ENCODE measurements at regions of chr6 and their contacts with region 1.

Region 1: GRCh38 chr6:107957909-107958688 is at the start of gene SEC63:
- DNase-seq: peak; percentile 92 to 97 (median 96)
- ATAC-seq: peak; percentile 100
- H3K4me3 ChIP-seq: peak within 1 kb of the TSS; percentile 96
- H3K4me3 Mint-ChIP-seq: peak within 1 kb of the TSS; percentile 94 to 100 (median 99)
- H3K27ac ChIP-seq: peak within 1 kb of the TSS; percentile 86
- H3K27ac Mint-ChIP-seq: peak within 1 kb of the TSS; percentile 80 to 98 (median 96)
- H3K4me1 ChIP-seq: peaks cover 15 to 17% of the 10 kb centered on the region in 2 donors
- H3K4me1 Mint-ChIP-seq: peaks cover 20 to 35% (median 29%) of the 10 kb centered on the region in 7 donors
- H3K27me3 ChIP-seq: no peaks in the 10 kb centered on the region
- H3K27me3 Mint-ChIP-seq: peaks cover 0 to 5% (median 0%) of the 10 kb centered on the region in 5 donors
- total RNA-seq, gene SEC63: 82.9 to 89.0 (median 86.0) TPM

Region 2: DNA sequence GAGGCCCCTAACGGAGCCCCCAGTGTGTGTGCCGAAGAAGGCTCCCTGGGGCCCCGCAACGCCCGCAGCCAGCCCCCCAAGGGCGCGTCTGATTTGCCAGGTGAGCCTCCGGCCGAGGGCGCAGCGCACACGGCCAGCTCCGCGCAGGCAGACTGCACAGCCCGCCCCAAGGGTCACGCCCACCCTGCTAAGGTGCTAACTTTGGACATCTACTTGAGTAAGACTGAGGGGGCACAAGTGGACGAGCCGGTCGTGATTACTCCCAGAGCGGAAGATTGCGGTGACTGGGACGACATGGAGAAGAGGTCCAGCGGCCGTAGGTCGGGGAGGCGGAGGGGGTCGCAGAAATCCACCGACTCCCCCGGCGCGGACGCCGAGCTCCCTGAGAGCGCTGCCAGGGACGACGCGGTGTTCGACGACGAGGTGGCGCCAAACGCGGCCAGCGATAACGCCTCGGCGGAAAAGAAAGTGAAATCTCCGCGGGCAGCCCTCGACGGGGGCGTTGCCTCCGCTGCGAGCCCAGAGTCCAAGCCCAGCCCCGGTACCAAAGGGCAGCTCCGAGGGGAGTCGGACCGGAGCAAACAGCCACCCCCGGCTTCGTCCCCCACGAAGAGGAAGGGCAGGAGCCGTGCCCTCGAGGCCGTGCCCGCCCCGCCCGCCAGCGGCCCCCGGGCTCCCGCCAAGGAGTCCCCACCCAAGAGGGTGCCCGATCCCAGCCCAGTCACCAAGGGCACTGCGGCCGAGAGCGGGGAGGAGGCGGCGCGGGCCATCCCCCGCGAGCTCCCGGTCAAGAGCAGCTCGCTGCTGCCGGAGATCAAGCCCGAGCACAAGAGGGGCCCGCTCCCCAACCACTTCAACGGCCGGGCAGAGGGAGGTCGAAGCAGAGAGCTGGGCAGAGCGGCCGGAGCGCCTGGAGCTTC is 1445.8 kb before region 1 on chr6:
- CTCF ChIA-PET with region 1: no interaction called
- POLR2A ChIA-PET with region 1: no interaction called
- intact Hi-C with region 1: loop called (anchors 5 to 10 kb)
- DNase-seq: peak; percentile 68 to 83 (median 78)
- ATAC-seq: peak; percentile 86
- H3K4me3 ChIP-seq: peak overlapping the region; percentile 92
- H3K4me3 Mint-ChIP-seq: peak overlapping the region; percentile 89 to 98 (median 96)
- H3K27ac ChIP-seq: peak overlapping the region; percentile 100
- H3K27ac Mint-ChIP-seq: peak overlapping the region; percentile 92 to 99 (median 96)
- H3K4me1 ChIP-seq: peaks cover 28 to 41% of the 10 kb centered on the region in 2 donors
- H3K4me1 Mint-ChIP-seq: peaks cover 34 to 60% (median 51%) of the 10 kb centered on the region in 7 donors
- H3K27me3 ChIP-seq: no peaks in the 10 kb centered on the region
- H3K27me3 Mint-ChIP-seq: peaks cover 0 to 40% (median 0%) of the 10 kb centered on the region in 5 donors

Region 3: GRCh38 chr6:107459283-107460082 is 498.6 kb before region 1 on chr6 and contains the start of gene PDSS2:
- CTCF ChIA-PET with region 1: no interaction called
- POLR2A ChIA-PET with region 1: no interaction called
- intact Hi-C with region 1: loop called (anchors 1 kb)
- DNase-seq: peak; percentile 83 to 98 (median 95)
- ATAC-seq: peak; percentile 100
- H3K4me3 ChIP-seq: peak within 1 kb of the TSS; percentile 95
- H3K4me3 Mint-ChIP-seq: peak within 1 kb of the TSS; percentile 87 to 99 (median 96)
- H3K27ac ChIP-seq: peak within 1 kb of the TSS; percentile 75
- H3K27ac Mint-ChIP-seq: peak within 1 kb of the TSS; percentile 92 to 99 (median 96)
- H3K4me1 ChIP-seq: peaks cover 5% of the 10 kb centered on the region in 2 donors
- H3K4me1 Mint-ChIP-seq: peaks cover 10 to 41% (median 36%) of the 10 kb centered on the region in 7 donors
- H3K27me3 ChIP-seq: no peaks in the 10 kb centered on the region
- H3K27me3 Mint-ChIP-seq: peaks cover 0 to 7% (median 0%) of the 10 kb centered on the region in 5 donors
- total RNA-seq, gene PDSS2: 12.0 to 15.3 (median 12.1) TPM

Region 4: DNA sequence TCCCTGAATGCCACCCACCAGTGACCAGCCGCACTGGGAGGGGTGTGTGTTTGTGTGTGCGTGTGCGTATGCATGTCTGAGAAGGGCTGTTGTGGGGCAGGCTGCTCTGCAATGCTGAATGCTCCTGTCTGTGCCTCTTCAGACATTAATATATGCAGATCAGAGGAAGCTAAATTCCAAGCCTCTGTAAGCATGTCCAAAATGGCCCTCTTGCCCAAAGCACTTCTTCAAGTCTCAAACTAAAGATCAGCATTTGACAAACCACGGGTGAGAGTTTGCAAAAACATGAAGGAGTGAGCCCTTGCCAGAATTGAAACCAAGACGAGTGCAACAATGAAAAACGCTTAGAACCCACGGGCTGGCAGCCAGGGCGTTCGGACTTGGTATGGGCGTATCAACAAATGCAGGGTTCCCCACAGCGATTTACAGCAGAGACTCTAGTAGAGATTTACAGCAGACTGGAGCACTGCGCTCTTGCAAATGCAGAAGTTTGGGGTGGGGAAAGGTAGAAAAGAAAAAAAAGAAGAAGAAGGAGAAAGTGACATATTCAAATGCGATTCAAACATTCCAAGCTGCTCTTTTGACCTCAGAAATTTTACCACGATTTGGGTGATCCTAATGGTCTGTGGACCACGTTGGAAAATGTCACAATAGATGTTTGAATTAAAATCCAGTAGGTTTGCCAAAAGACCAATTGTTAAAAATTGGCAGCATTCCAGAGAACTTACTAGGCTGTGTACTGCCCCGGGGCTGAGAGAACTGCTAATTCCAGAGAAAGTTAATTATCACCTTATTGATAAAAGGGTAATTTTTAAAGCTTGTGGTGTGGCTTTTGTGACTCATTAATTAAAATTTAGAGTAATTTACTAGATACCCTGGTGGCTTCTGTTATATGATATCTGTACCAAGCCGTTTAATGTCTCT is 137.5 kb before region 1 on chr6:
- CTCF ChIA-PET with region 1: no interaction called
- POLR2A ChIA-PET with region 1: interaction called, 4 read pairs
- intact Hi-C with region 1: loop called (anchors 1 to 2 kb)
- DNase-seq: peak in 8 of 9 donors; percentile 13 to 62 (median 51)
- ATAC-seq: peak; percentile 9
- H3K4me3 ChIP-seq: peak overlapping the region; percentile 76
- H3K4me3 Mint-ChIP-seq: peak overlapping the region; percentile 85 to 98 (median 95)
- H3K27ac ChIP-seq: peak overlapping the region; percentile 95
- H3K27ac Mint-ChIP-seq: peak overlapping the region; percentile 96 to 100 (median 99)
- H3K4me1 ChIP-seq: peaks cover 57 to 59% of the 10 kb centered on the region in 2 donors
- H3K4me1 Mint-ChIP-seq: peaks cover 45 to 83% (median 81%) of the 10 kb centered on the region in 7 donors
- H3K27me3 ChIP-seq: no peaks in the 10 kb centered on the region
- H3K27me3 Mint-ChIP-seq: no peaks in the 10 kb centered on the region

Region 5: GRCh38 chr6:107941627-107942026 is 16.5 kb before region 1 on chr6:
- CTCF ChIA-PET with region 1: no interaction called
- POLR2A ChIA-PET with region 1: interaction called, 3 read pairs
- intact Hi-C with region 1: loop called in 1 of 2 experiments (anchors 2 kb)
- DNase-seq: no peak
- ATAC-seq: no peak
- H3K4me3 ChIP-seq: no peak overlapping the region
- H3K4me3 Mint-ChIP-seq: no peak overlapping the region
- H3K27ac ChIP-seq: no peak overlapping the region
- H3K27ac Mint-ChIP-seq: no peak overlapping the region
- H3K4me1 ChIP-seq: peaks cover 0 to 11% of the 10 kb centered on the region in 2 donors
- H3K4me1 Mint-ChIP-seq: peaks cover 25 to 65% (median 56%) of the 10 kb centered on the region in 7 donors
- H3K27me3 ChIP-seq: no peaks in the 10 kb centered on the region
- H3K27me3 Mint-ChIP-seq: no peaks in the 10 kb centered on the region

Region 6: DNA sequence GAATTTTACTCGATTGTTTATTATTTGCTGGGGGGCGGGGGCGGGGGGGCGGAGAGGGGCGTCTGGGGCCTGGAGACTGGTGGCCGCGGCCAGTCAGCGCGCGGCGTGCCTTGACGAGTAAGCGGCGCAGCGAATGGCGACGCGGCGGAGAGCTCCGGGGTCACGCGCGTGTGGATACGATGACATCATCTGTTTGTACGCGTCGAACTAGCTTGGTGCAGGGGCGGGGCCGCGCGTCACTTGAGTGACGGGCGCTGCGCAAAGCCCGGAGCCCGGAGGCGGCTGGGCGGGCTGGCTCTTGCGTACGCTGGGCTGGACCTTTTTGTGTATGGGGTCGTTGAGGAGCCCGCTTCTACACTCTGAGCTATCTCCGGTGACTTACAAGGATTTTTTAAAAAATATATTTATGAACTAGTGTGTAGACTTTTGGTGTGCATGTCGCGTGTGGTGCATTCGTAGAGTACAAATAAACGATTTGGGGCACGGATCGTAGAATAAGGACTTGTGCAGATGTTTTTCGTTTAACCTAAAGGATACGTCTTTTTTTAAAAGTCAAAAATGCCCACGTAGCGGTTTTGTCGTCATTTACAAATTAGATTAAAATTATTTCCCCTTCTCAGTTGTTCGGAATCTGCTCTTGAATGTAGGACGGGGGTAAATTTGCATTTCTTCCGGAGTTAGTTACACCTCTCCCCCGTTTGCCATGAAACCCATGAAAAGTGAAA is 600.4 kb after region 1 on chr6:
- CTCF ChIA-PET with region 1: no interaction called
- POLR2A ChIA-PET with region 1: interaction called, 4 read pairs
- intact Hi-C with region 1: loop called in 1 of 2 experiments (anchors 1 kb)
- DNase-seq: peak; percentile 91 to 98 (median 97)
- ATAC-seq: peak; percentile 75
- H3K4me3 ChIP-seq: peak overlapping the region; percentile 75
- H3K4me3 Mint-ChIP-seq: peak overlapping the region; percentile 88 to 98 (median 97)
- H3K27ac ChIP-seq: peak overlapping the region; percentile 100
- H3K27ac Mint-ChIP-seq: peak overlapping the region; percentile 87 to 99 (median 97)
- H3K4me1 ChIP-seq: peaks cover 12 to 13% of the 10 kb centered on the region in 2 donors
- H3K4me1 Mint-ChIP-seq: peaks cover 16 to 28% (median 20%) of the 10 kb centered on the region in 7 donors
- H3K27me3 ChIP-seq: no peaks in the 10 kb centered on the region
- H3K27me3 Mint-ChIP-seq: peaks cover 0 to 55% (median 6%) of the 10 kb centered on the region in 5 donors

Region 7: GRCh38 chr6:109440331-109441068 is 1482.4 kb after region 1 on chr6 and contains the starts of genes PPIL6 and SMPD2:
- CTCF ChIA-PET with region 1: no interaction called
- POLR2A ChIA-PET with region 1: no interaction called
- intact Hi-C with region 1: loop called in 1 of 2 experiments (anchors 2 kb)
- DNase-seq: peak; percentile 63 to 85 (median 77)
- ATAC-seq: peak; percentile 91
- H3K4me3 ChIP-seq: peak within 1 kb of the TSS; percentile 65
- H3K4me3 Mint-ChIP-seq: peak within 1 kb of the TSS; percentile 90 to 95 (median 94)
- H3K27ac ChIP-seq: peak within 1 kb of the TSS; percentile 98
- H3K27ac Mint-ChIP-seq: peak within 1 kb of the TSS; percentile 87 to 97 (median 93)
- H3K4me1 ChIP-seq: peaks cover 11% of the 10 kb centered on the region in 2 donors
- H3K4me1 Mint-ChIP-seq: peaks cover 10 to 32% (median 21%) of the 10 kb centered on the region in 7 donors
- H3K27me3 ChIP-seq: no peaks in the 10 kb centered on the region
- H3K27me3 Mint-ChIP-seq: peaks cover 0 to 2% (median 0%) of the 10 kb centered on the region in 5 donors
- total RNA-seq, gene PPIL6: 0.13 to 1.9 (median 0.40) TPM in 4 of 5 experiments, not detected in the other
- total RNA-seq, gene SMPD2: 16.9 to 33.7 (median 19.6) TPM